HAP-1 (cell line): ENCODE measurements at regions of chr12 and their contacts with region 1.

Region 1: DNA sequence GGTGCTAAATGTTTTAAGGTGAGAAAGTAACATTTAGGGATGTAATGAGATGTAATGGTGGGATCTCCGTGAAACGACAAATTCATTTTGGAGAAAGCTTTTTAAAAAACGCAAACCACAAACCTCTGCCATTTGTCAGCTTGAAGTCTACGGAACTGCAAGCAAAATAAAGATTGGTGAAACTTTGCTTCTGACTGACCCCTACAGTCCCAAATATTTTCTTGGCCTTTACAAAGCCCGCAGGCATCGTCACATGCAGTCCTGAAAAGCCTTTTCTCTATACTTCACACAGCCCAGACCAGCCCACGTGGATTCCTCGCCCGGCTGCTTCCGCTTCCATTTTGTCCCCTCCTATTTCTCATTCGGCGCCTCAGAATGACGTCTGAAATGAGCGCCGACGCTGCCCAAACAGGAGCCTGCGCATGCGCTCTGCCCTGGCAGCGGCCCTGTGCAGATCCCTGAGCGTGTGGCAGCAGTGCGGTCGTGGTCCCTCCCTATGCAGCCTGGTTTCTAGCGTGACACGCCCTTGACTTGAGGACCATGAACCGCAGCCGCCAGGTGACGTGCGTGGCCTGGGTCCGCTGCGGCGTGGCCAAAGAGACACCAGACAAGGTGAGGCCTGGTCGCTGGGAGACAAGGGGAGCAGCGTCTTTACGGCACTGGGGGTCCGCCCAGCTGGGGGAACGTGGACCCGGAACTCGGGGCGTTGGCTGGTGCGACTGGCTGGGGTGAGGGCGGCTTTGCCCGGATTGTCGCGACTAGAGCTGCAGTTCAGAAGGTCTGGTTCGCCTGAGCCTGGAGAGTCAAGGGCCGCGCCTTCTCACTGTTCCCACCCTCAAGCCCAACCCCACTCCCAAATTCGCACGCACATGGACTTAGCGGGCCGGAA is at the start of gene PWP1:
- DNase-seq: peak; percentile 90 to 94
- H3K4me3 ChIP-seq: peak within 1 kb of the TSS; percentile 88
- H3K4me1 ChIP-seq: peaks cover 5% of the 10 kb centered on the region
- H3K27me3 ChIP-seq: peaks cover 4% of the 10 kb centered on the region; the same call in 1 of the 2 replicates

Region 2: DNA sequence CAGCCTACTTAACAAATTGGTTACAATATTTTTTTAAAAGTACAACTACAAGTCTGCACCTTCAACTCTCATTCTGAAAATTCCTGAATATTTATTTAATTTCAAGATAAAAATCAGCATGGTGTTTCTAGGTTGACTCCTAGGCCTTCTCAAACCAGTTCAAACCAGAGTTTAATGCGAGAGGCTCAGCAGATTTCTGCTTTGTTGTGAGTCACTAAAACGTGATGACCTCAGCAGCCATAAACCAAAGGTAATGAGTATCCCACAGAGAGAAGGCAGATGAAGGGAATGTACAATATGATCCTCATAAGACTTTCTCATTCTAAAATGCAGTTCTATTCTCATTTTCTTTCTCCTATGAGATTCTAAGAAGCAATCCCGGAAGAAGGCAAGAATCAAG is 73.8 kb after region 1 on chr12:
- in situ Hi-C with region 1: loop called (anchors 5 kb)
- DNase-seq: peak; percentile 58 to 72
- H3K4me3 ChIP-seq: peak overlapping the region; percentile 81
- H3K4me1 ChIP-seq: peaks cover 6% of the 10 kb centered on the region
- H3K27me3 ChIP-seq: no peaks in the 10 kb centered on the region

Region 3: GRCh38 chr12:108514973-108515814 is 829.6 kb after region 1 on chr12 and contains the start of gene FICD:
- in situ Hi-C with region 1: loop called (anchors 25 kb)
- DNase-seq: peak; percentile 94 to 100
- H3K4me3 ChIP-seq: peak within 1 kb of the TSS; percentile 74
- H3K4me1 ChIP-seq: peaks cover 7% of the 10 kb centered on the region; the same call in 1 of the 2 replicates
- H3K27me3 ChIP-seq: no peaks in the 10 kb centered on the region